ENCODE measurements at regions of chr15 and their contacts with region 1.

Region 1: DNA sequence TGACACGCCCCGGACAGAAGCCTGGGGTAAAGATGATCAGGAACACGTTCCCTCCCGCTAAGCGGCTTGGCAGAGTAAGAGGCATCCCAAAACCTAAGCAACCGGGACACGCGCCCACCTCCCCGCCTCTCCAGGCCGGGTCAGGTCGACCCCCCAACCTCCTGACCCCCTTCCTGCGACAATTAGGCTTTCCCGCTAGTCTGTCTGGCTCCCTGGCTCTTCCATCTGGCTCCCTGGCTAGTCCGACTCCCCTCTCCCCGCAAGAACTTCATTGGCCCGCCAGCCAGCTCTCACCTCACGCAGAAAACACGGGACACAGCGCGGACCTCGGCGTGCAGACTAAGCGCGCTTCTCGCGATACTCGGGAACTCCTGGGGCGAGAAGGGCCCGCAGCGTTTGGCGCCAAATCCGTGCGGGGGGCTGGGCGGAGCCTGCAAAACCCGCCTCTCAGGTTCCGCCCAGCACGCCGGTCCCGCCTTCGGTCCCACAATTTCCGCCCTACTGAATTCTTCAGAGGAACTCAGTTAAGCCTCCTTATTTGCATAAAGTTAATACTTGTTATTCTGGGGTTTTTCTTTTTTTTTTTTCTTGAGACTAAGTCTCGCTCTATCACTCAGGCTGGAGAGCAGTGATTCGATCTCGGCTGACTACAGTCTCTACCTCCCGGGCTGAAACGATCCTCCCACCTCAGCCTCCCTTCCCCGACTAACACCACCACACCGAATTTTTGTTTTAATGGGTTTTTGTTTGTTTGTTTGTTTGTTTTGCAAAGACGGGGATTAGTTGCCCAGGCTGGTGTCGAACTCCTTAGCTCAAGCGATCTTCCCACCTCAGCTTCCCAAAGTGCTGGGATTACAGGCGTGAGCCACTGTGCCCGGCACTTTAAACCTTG is at the start of gene TIPIN:
- DNase-seq: peak; percentile 99
- ATAC-seq: peak; percentile 98
- H3K4me3 Mint-ChIP-seq: peak within 1 kb of the TSS; percentile 97
- H3K27ac Mint-ChIP-seq: peak within 1 kb of the TSS; percentile 99
- H3K4me1 Mint-ChIP-seq: peaks cover 24% of the 10 kb centered on the region
- H3K27me3 Mint-ChIP-seq: no peaks in the 10 kb centered on the region
- total RNA-seq, gene TIPIN: 49.9 to 50.8 TPM

Region 2: DNA sequence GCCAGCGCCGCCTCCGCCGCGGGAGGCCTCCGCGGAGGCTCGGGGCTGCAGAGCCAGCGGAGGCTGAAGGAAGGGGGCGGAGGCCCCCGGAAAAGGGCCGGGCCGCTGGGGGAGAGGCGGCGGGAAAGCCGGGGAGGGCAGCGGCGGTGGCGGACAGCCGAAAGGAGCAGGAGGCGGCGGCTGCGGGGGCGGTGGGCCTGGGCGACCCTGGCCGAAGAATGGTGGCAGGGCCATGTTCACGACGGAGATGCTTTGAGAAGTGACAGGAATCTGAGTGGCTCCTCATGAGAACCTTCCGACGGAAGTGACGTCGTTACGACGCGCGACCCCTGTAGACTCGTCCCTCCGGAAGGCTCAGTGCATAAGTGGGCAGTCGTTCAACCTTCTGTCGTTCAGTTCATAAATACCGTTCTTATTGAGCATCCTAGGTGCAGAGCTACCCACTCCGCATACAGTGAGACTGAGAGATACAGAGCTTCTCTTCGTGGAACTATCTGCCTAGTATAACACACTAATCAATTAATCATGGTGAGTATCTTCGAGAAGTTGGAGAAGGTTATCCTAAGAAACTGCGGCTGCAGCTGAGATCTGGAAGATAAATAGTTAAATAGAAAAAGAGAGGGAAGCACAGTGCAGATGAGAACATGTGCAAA is 1222.9 kb before region 1 on chr15 and contains the start of gene PDCD7:
- CTCF ChIA-PET with region 1: no interaction called
- POLR2A ChIA-PET with region 1: no interaction called
- intact Hi-C with region 1: loop called in 1 of 2 experiments (anchors 1 kb)
- DNase-seq: peak; percentile 91
- ATAC-seq: peak; percentile 96
- H3K4me3 Mint-ChIP-seq: peak within 1 kb of the TSS; percentile 85
- H3K27ac Mint-ChIP-seq: peak within 1 kb of the TSS; percentile 93
- H3K4me1 Mint-ChIP-seq: peaks cover 26% of the 10 kb centered on the region
- H3K27me3 Mint-ChIP-seq: no peaks in the 10 kb centered on the region
- total RNA-seq, gene PDCD7: 16.6 to 24.8 TPM

Region 3: GRCh38 chr15:66241087-66241907 is 115.3 kb before region 1 on chr15:
- CTCF ChIA-PET with region 1: no interaction called
- POLR2A ChIA-PET with region 1: interaction called, 11 read pairs
- intact Hi-C with region 1: no loop called
- DNase-seq: no peak
- ATAC-seq: no peak
- H3K4me3 Mint-ChIP-seq: no peak overlapping the region
- H3K27ac Mint-ChIP-seq: no peak overlapping the region
- H3K4me1 Mint-ChIP-seq: no peaks in the 10 kb centered on the region
- H3K27me3 Mint-ChIP-seq: peaks cover 13% of the 10 kb centered on the region

Region 4: GRCh38 chr15:66369773-66370651 is 13.4 kb after region 1 on chr15:
- CTCF ChIA-PET with region 1: interaction called, 3 read pairs
- POLR2A ChIA-PET with region 1: interaction called, 4 read pairs
- intact Hi-C with region 1: loop called (anchors 1 kb)
- DNase-seq: peak; percentile 64
- ATAC-seq: peak; percentile 83
- H3K4me3 Mint-ChIP-seq: peak overlapping the region; percentile 47
- H3K27ac Mint-ChIP-seq: peak overlapping the region; percentile 96
- H3K4me1 Mint-ChIP-seq: peaks cover 15% of the 10 kb centered on the region
- H3K27me3 Mint-ChIP-seq: no peaks in the 10 kb centered on the region

Region 5: DNA sequence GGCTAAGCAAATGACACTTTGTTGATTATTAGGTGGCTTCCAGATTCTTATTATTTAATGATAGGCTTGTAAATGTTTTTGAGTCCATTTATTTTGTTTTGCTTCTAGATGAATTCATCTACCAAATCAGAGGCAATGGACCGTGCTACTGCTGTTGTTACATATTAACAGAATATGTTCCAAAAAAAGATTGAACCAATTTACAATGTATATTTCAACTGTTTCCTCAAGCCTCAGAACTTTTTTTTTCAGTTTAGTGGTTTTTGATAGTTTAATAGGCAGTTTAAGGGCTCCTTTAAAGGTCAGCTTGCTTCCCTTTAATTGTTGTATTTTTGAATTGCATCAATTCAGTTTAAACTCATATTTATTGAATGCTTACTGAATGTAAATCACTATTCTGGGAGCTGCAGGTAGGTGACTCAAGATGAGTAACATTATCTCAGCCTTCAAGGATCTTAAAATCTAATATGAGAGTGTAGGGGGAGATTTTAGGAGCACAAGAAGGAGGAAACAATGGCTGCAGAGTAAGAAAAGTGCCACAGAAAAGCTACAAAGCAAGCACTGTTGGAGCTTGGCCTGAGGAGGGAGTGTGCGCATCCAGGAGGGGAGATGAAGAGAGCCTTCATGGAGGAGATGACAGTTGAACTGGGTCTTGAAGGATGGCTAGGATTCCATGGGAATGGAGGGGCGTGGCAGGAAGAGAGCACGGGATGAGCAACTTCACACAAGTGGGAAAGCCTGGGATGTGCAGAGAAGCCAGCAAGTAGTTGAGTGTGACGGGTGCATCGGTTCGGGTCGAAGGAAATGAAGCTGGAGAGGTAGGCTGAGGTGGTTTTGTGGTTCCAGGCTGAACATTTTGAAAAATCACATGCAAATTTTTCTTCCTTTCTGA is 44.8 kb after region 1 on chr15:
- CTCF ChIA-PET with region 1: interaction called, 5 read pairs
- POLR2A ChIA-PET with region 1: no interaction called
- intact Hi-C with region 1: loop called in 1 of 2 experiments (anchors 5 kb)
- DNase-seq: peak; percentile 43
- ATAC-seq: peak; percentile 74
- H3K4me3 Mint-ChIP-seq: peak overlapping the region; percentile 50
- H3K27ac Mint-ChIP-seq: peak overlapping the region; percentile 69
- H3K4me1 Mint-ChIP-seq: peaks cover 75% of the 10 kb centered on the region
- H3K27me3 Mint-ChIP-seq: no peaks in the 10 kb centered on the region

Region 6: DNA sequence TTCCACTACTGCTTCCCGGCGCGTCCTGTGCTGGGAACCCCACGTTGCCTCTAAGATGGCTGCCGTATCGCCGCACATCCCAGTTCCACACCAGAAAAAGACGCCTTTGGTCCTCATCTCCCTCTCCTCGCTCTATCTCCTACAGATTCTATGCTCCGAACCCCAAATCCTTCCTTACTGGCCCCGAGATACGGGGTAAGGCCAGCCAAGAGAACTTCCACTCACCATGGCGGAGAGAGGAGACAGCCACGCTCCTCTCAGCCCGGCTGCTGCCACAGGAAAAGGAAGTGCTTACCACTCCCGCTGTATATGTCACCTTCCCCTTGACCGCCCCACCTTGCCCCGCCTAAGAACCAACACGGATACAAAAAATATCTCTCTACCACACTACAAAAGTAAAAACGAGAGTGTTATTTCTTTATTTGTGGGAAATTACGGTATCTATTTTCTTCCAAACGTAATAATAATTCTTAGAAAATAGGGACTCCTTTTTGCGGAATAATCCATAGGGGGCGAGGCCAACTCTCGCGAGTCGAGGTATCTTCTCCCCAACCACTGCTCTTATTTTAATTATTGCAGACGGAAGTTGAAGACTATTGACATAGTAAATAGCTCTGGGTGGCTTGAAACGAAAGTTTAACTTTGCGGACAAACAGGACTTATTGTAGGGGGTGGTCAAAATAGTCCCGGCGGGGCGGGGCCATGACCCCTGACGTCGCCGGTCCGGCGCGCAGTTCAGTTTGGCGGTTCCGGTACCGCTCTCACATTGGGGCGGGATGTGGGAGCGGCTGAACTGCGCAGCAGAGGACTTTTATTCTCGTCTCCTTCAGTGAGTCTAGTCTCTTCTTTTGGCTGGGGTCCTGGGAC is 148.2 kb after region 1 on chr15 and contains the starts of genes RPL4 and ZWILCH:
- CTCF ChIA-PET with region 1: interaction called, 22 read pairs
- POLR2A ChIA-PET with region 1: no interaction called
- intact Hi-C with region 1: loop called (anchors 1 to 2 kb)
- DNase-seq: peak; percentile 85
- ATAC-seq: peak; percentile 89
- H3K4me3 Mint-ChIP-seq: peak within 1 kb of the TSS; percentile 88
- H3K27ac Mint-ChIP-seq: peak within 1 kb of the TSS; percentile 98
- H3K4me1 Mint-ChIP-seq: peaks cover 56% of the 10 kb centered on the region
- H3K27me3 Mint-ChIP-seq: no peaks in the 10 kb centered on the region
- total RNA-seq, gene RPL4: 4,227 to 4,959 TPM
- total RNA-seq, gene ZWILCH: 27.4 to 31.1 TPM

Region 7: DNA sequence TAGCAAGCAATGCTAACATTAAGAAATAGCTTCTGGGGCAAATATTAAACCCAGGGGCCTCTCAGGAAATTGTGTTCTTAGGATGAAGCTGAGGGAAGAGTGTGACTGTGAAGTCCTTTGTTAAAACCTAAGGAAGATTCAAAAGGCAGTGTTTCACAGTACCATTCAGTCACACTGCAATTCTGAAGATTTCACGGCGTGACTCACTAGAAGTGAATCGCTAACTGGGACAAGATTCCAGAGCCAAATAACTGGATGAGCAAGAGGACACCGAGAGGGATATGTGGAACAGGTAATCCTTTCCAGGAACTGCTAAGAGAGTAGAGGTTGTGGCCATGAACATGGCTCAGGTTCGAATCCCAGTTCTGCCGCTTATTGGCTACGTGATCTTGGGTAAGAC is 647.0 kb after region 1 on chr15:
- CTCF ChIA-PET with region 1: no interaction called
- POLR2A ChIA-PET with region 1: no interaction called
- intact Hi-C with region 1: no loop called
- DNase-seq: no peak
- ATAC-seq: no peak
- H3K4me3 Mint-ChIP-seq: no peak overlapping the region
- H3K27ac Mint-ChIP-seq: no peak overlapping the region
- H3K4me1 Mint-ChIP-seq: no peaks in the 10 kb centered on the region
- H3K27me3 Mint-ChIP-seq: no peaks in the 10 kb centered on the region